ENCODE measurements at regions of chr3 and their contacts with region 1.

Region 1: DNA sequence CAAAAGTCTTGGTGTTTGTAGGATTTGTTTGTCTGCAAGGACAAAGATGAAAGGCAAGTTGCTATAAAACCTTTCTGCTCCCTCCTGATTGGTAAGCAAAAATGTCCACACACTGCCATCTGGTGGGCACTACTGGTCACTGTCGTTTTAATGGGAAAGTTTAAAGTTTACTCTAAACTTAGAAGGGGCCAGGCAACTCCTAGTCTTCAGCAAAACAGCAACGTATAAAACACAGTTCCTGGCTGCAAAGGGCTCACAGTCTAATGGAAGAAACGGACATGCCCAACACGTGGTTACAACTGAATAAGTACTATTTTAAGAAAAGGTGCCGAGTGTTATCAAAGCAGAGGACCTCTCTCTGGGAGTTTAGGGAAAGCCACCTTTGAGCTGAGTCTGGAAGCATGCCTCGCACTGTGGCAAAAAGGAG is 23.7 kb upstream of the TPRG1 start:
- DNase-seq: peak; percentile 75
- H3K4me3 Mint-ChIP-seq: no peak overlapping the region
- H3K27ac Mint-ChIP-seq: no peak overlapping the region
- H3K4me1 Mint-ChIP-seq: peaks cover 42% of the 10 kb centered on the region
- H3K27me3 Mint-ChIP-seq: no peaks in the 10 kb centered on the region

Region 2: DNA sequence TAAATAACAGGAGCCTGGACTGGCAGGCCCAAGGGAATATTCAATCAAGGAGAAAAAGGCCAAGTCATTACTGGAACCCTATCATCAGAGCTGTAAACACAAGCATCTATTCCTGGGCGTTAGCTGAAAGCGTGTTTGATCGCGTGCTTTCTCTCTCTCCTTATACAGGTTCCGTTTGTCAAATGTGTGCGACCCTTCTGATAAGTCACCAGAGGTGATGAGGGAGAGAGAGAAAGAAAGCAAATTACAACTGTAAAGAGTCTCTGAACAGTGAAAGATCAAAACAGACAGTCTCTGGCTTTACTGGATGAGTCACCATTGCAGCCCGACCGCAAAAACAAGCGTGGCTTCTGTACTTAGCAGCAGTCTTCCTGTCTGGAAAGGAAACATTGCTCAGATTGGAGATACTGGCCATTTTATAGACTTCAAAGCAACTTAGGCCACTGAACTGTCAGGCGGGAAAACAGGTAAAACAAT is 15.8 kb before region 1 on chr3:
- CTCF ChIA-PET with region 1: interaction called, 8 read pairs
- POLR2A ChIA-PET with region 1: interaction called, 21 read pairs
- DNase-seq: peak; percentile 88
- H3K4me3 Mint-ChIP-seq: peak overlapping the region; percentile 46
- H3K27ac Mint-ChIP-seq: peak overlapping the region; percentile 94
- H3K4me1 Mint-ChIP-seq: peaks cover 39% of the 10 kb centered on the region
- H3K27me3 Mint-ChIP-seq: no peaks in the 10 kb centered on the region